Activated B cell treated with CpG ODN at 0.5 μM for 24 hours (primary cell): ENCODE measurements at regions of chr11 and their contacts with region 1.

Region 1: DNA sequence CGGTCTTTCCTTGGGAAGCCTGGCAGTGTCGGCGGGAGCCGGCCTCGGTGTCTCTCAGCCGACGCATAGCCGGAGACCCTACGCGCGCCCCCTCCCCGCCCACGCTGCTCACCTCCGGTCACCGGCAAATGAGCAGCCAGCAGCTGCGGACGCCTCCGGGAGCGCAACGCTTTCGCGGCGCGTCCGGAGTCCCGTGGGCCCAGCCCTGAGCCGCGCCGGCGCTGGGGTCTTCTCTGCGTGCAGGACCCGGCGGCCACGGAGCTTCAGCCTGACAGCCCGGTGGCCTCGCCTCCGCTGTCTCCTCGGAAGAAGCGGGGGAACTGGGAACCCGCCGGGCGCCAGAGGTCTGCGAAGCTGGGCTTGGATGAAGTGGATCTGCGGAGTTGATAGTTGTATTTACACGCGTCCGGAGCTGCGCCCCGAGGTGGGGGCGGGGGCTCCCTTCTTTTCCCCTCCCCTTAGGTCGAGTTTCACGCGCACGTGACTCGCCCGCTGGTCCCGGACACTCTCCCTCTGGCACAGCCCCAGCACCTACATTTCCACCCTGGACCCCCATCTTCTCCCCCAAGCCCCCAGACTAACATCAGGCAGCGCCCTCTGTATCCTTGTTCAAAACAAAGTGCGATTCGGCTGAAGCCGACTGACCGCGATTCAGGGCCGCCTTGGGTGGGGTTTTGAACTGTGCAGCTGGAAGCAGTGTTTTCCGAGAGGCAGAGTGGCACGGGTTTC is at the start of gene SLC43A1:
- DNase-seq: peak; percentile 27
- ATAC-seq: peak; percentile 29
- H3K4me3 Mint-ChIP-seq: peak within 1 kb of the TSS; percentile 97
- H3K27ac Mint-ChIP-seq: peak within 1 kb of the TSS; percentile 80
- H3K4me1 Mint-ChIP-seq: peaks cover 43% of the 10 kb centered on the region
- H3K27me3 Mint-ChIP-seq: no peaks in the 10 kb centered on the region
- CTCF ChIP-seq: no peak
- total RNA-seq, gene SLC43A1: 11.1 and 12.8 TPM in 2 replicates

Region 2: DNA sequence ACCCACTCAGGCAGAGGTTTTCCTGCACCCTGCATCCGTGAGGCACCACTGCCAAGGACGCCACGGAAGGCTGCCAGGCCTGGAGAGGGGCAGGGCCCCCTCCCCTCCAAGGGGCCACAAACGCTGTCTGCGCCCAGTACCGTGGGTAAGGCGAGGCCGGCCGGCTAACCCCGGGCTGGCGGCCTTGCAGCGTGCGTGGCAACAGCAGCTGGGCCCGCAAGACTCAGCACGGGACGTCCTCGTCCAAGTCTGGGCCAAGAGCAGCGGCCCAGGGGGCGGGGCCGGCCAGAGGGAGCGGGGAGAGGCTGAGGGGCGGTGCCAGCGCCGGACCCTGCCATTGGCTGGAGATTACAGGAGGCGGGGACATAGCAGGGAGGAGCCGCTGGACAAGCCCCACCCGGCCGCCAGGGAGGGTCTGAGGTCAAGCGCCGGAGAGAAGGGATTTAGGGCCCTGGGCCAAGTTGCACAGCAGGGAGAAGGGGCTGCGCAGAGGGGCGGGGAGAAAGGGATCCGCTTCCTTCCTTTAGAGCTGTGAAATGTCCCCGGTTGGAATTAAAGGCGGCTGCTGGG is 16.0 kb before region 1 on chr11:
- CTCF ChIA-PET with region 1: interaction called, 45 read pairs
- POLR2A ChIA-PET with region 1: interaction called, 18 read pairs
- intact Hi-C with region 1: loop called (anchors 2 kb)
- DNase-seq: peak; percentile 64
- ATAC-seq: peak; percentile 100
- H3K4me3 Mint-ChIP-seq: peak overlapping the region; percentile 24
- H3K27ac Mint-ChIP-seq: no peak overlapping the region
- H3K4me1 Mint-ChIP-seq: peaks cover 6% of the 10 kb centered on the region
- H3K27me3 Mint-ChIP-seq: no peaks in the 10 kb centered on the region
- CTCF ChIP-seq: no peak

Region 3: GRCh38 chr11:57546869-57547475 is 31.5 kb after region 1 on chr11:
- CTCF ChIA-PET with region 1: no interaction called
- POLR2A ChIA-PET with region 1: no interaction called
- intact Hi-C with region 1: no loop called
- DNase-seq: no peak
- ATAC-seq: no peak
- H3K4me3 Mint-ChIP-seq: no peak overlapping the region
- H3K27ac Mint-ChIP-seq: peak overlapping the region; percentile 80
- H3K4me1 Mint-ChIP-seq: peaks cover 20% of the 10 kb centered on the region
- H3K27me3 Mint-ChIP-seq: no peaks in the 10 kb centered on the region
- CTCF ChIP-seq: no peak

Region 4: DNA sequence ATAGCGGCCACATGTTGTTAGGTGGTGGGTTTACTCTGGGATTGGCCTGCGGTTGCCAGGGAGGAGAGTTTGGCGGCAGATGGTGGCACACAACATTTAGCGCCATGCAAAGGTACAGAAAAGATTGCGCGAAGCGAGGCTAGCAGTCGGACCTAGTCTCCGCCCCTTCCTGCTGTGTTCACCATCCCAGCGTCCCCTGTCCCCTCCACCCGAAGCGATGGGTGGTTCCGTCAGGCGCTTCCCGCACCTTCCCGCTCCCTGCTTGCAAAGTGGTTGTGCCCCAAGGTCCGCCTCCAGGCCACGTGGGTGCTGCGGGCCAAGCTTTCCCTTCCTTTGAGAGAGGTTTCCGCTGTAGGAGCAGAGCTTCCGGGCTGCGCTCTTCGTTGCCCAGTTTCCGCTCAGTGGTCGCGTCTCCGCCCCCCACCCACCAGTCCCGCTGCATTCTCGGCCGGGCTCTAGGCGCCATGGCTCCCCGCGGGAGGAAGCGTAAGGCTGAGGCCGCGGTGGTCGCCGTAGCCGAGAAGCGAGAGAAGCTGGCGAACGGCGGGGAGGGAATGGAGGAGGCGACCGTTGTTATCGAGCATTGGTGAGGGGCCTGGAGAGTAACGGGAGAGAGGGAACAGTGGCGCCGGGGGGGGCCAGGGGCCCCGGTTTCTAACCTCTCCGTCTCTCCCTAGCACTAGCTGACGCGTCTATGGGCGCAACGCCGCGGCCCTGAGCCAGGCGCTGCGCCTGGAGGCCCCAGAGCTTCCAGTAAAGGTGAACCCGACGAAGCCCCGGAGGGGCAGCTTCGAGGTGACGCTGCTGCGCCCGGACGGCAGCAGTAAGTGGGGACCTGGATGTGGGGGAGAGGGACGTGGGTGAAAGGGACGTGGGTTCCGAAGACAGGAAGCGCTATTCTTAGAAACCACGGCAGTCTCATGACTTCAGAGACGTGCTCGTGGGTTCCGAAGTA is 225.9 kb after region 1 on chr11 and contains the start of gene SELENOH:
- CTCF ChIA-PET with region 1: no interaction called
- POLR2A ChIA-PET with region 1: no interaction called
- intact Hi-C with region 1: no loop called
- DNase-seq: peak; percentile 84
- ATAC-seq: peak; percentile 90
- H3K4me3 Mint-ChIP-seq: peak within 1 kb of the TSS; percentile 96
- H3K27ac Mint-ChIP-seq: peak within 1 kb of the TSS; percentile 98
- H3K4me1 Mint-ChIP-seq: peaks cover 30% of the 10 kb centered on the region
- H3K27me3 Mint-ChIP-seq: no peaks in the 10 kb centered on the region
- CTCF ChIP-seq: no peak
- total RNA-seq, gene SELENOH: 210 and 224 TPM in 2 replicates

Region 5: GRCh38 chr11:58506935-58507334 is 991.4 kb after region 1 on chr11:
- CTCF ChIA-PET with region 1: no interaction called
- POLR2A ChIA-PET with region 1: no interaction called
- intact Hi-C with region 1: no loop called
- DNase-seq: no peak
- ATAC-seq: no peak
- H3K4me3 Mint-ChIP-seq: peak overlapping the region; percentile 17
- H3K27ac Mint-ChIP-seq: no peak overlapping the region
- H3K4me1 Mint-ChIP-seq: peaks cover 36% of the 10 kb centered on the region
- H3K27me3 Mint-ChIP-seq: no peaks in the 10 kb centered on the region
- CTCF ChIP-seq: no peak